Caco-2 (cell line): ENCODE measurements at regions of chr1 and their contacts with region 1.

Region 1: GRCh38 chr1:244272471-244273261 is 179.0 kb downstream of the ADSS2 start:
- DNase-seq: peak; percentile 53 to 76
- H3K4me3 ChIP-seq: no peak overlapping the region
- H3K4me3 Mint-ChIP-seq: no peak overlapping the region
- H3K27ac Mint-ChIP-seq: no peak overlapping the region
- H3K4me1 ChIP-seq: no peaks in the 10 kb centered on the region
- H3K4me1 Mint-ChIP-seq: no peaks in the 10 kb centered on the region
- H3K27me3 ChIP-seq: no peaks in the 10 kb centered on the region
- H3K27me3 Mint-ChIP-seq: no peaks in the 10 kb centered on the region
- CTCF ChIP-seq: peak; percentile 95 to 99

Region 2: GRCh38 chr1:243508303-243508713 is 764.4 kb before region 1 on chr1:
- CTCF ChIA-PET with region 1: no interaction called
- POLR2A ChIA-PET with region 1: no interaction called
- intact Hi-C with region 1: loop called (anchors 10 kb)
- DNase-seq: no peak
- H3K4me3 ChIP-seq: no peak overlapping the region
- H3K4me3 Mint-ChIP-seq: no peak overlapping the region
- H3K27ac Mint-ChIP-seq: no peak overlapping the region
- H3K4me1 ChIP-seq: no peaks in the 10 kb centered on the region
- H3K4me1 Mint-ChIP-seq: no peaks in the 10 kb centered on the region
- H3K27me3 ChIP-seq: no peaks in the 10 kb centered on the region
- H3K27me3 Mint-ChIP-seq: no peaks in the 10 kb centered on the region
- CTCF ChIP-seq: no peak

Region 3: GRCh38 chr1:243946946-243947345 is 325.7 kb before region 1 on chr1:
- CTCF ChIA-PET with region 1: no interaction called
- POLR2A ChIA-PET with region 1: no interaction called
- intact Hi-C with region 1: loop called (anchors 2 kb)
- DNase-seq: peak in 1 of 2 experiments; percentile 35
- H3K4me3 ChIP-seq: no peak overlapping the region
- H3K4me3 Mint-ChIP-seq: no peak overlapping the region
- H3K27ac Mint-ChIP-seq: no peak overlapping the region
- H3K4me1 ChIP-seq: peaks cover 35% of the 10 kb centered on the region
- H3K4me1 Mint-ChIP-seq: peaks cover 5% of the 10 kb centered on the region
- H3K27me3 ChIP-seq: no peaks in the 10 kb centered on the region
- H3K27me3 Mint-ChIP-seq: no peaks in the 10 kb centered on the region
- CTCF ChIP-seq: peak; percentile 12 to 29

Region 4: DNA sequence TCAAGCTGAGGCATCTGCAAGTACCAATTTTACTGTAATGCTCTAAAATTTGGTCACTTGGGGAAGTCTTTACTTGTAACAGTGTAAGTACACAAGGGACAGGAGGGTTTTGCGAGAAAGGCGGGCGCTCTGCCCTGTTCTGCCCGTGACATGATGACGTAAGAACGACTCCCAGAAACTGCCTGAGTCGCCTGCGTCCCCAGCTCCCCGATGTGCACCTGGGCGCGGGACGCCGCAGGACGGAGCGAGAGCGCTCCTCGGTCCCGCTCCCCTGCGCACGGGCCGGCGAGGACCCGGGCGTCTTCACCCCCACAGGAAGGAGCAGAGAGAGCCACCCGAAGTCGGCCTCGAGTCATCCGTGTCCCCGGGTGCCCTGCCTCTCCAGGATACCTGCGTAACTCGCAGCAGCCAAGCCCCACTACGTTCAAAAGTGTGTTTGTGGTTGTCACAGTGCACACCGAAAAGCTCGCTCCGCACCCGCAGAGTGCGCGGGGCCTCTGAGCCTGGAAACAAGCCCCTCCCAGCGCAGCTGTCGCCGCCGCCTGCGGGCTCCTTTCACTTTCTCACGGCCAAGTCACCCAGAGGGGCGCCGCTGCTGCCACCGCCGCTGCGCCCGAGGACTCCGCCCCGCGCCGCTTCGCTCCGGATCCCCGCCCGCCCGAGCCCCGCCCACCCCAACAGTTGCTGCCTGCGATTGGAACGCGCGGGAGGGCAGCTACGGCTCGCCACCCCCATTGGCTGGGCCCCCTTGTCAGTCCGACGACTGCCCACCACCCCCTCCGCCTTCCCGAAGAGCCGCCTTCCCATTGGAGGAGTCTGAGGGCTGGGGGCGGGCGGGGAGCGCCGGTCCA is 224.8 kb before region 1 on chr1:
- CTCF ChIA-PET with region 1: no interaction called
- POLR2A ChIA-PET with region 1: no interaction called
- intact Hi-C with region 1: loop called (anchors 1 kb)
- DNase-seq: peak; percentile 97 to 99
- H3K4me3 ChIP-seq: peak overlapping the region; percentile 96
- H3K4me3 Mint-ChIP-seq: peak overlapping the region; percentile 85
- H3K27ac Mint-ChIP-seq: peak overlapping the region; percentile 57
- H3K4me1 ChIP-seq: 0 out of 2 replicates have a peak, but pooled peaks cover 11% of the 10 kb centered on the region
- H3K4me1 Mint-ChIP-seq: no peaks in the 10 kb centered on the region
- H3K27me3 ChIP-seq: no peaks in the 10 kb centered on the region
- H3K27me3 Mint-ChIP-seq: peaks cover 10% of the 10 kb centered on the region
- CTCF ChIP-seq: no peak

Region 5: GRCh38 chr1:244231572-244232315 is 40.9 kb before region 1 on chr1:
- CTCF ChIA-PET with region 1: no interaction called
- POLR2A ChIA-PET with region 1: no interaction called
- intact Hi-C with region 1: loop called (anchors 2 kb)
- DNase-seq: peak in 1 of 2 experiments; percentile 31
- H3K4me3 ChIP-seq: peak overlapping the region; percentile 38
- H3K4me3 Mint-ChIP-seq: peak overlapping the region; percentile 77
- H3K27ac Mint-ChIP-seq: no peak overlapping the region
- H3K4me1 ChIP-seq: peaks cover 3% of the 10 kb centered on the region; the same call in 1 of the 2 replicates
- H3K4me1 Mint-ChIP-seq: peaks cover 6% of the 10 kb centered on the region
- H3K27me3 ChIP-seq: no peaks in the 10 kb centered on the region
- H3K27me3 Mint-ChIP-seq: no peaks in the 10 kb centered on the region
- CTCF ChIP-seq: no peak

Region 6: DNA sequence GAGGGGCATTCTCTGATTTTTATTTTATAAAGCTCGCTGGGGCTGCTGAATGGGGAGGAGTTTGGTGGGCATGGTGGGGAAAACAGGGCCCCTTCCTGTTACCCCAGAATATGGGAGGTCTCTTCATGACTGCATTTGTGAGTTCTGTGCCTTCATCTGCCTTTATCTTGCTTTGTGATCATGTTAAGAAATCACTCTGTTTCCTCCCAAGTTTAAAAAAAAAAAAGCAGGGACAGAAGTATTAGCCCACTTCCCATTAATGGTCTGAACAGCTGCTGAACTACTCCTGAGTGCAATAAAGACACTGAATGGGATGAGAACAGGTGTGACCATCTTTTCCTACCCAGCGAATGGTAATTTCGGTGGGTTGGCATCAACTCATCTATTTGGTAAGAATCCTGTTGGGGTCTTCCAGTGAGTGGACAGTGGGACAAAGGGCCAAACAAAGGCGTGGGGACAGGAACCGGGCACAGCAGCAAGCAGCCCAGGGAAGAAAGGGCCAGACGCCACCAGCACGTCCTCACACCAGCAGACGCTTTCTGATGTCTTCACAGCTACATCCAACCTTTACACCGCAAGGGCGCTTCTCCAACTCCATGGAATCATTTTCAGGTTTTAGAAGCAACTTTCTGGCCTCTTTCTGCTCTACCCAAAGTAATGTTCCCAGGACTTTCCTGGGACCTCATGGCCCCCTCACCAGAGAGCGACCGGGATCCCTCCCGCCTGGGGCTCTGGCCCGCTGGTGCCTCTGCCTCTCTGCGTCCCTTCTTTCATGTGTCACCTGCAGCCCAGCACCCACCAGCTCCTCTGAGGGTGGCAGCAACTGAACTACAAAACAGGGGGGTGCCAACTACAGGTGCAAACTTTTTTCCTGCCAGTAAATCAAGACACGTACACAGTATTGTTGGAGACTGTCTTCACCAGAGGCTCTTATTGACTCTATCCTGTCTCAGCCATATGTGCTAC is 18.9 kb after region 1 on chr1:
- CTCF ChIA-PET with region 1: no interaction called
- POLR2A ChIA-PET with region 1: no interaction called
- intact Hi-C with region 1: no loop called
- DNase-seq: no peak
- H3K4me3 ChIP-seq: no peak overlapping the region
- H3K4me3 Mint-ChIP-seq: no peak overlapping the region
- H3K27ac Mint-ChIP-seq: no peak overlapping the region
- H3K4me1 ChIP-seq: no peaks in the 10 kb centered on the region
- H3K4me1 Mint-ChIP-seq: no peaks in the 10 kb centered on the region
- H3K27me3 ChIP-seq: no peaks in the 10 kb centered on the region
- H3K27me3 Mint-ChIP-seq: no peaks in the 10 kb centered on the region
- CTCF ChIP-seq: no peak

Region 7: GRCh38 chr1:244305746-244306341 is 33.2 kb after region 1 on chr1:
- CTCF ChIA-PET with region 1: no interaction called
- POLR2A ChIA-PET with region 1: no interaction called
- intact Hi-C with region 1: no loop called
- DNase-seq: no peak
- H3K4me3 ChIP-seq: no peak overlapping the region
- H3K4me3 Mint-ChIP-seq: no peak overlapping the region
- H3K27ac Mint-ChIP-seq: no peak overlapping the region
- H3K4me1 ChIP-seq: peaks cover 20% of the 10 kb centered on the region
- H3K4me1 Mint-ChIP-seq: peaks cover 28% of the 10 kb centered on the region
- H3K27me3 ChIP-seq: no peaks in the 10 kb centered on the region
- H3K27me3 Mint-ChIP-seq: no peaks in the 10 kb centered on the region
- CTCF ChIP-seq: no peak

Region 8: GRCh38 chr1:244361764-244362473 is 89.3 kb after region 1 on chr1:
- CTCF ChIA-PET with region 1: no interaction called
- POLR2A ChIA-PET with region 1: no interaction called
- intact Hi-C with region 1: no loop called
- DNase-seq: peak; percentile 79 to 82
- H3K4me3 ChIP-seq: no peak overlapping the region
- H3K4me3 Mint-ChIP-seq: peak overlapping the region; percentile 65
- H3K27ac Mint-ChIP-seq: peak overlapping the region; percentile 85
- H3K4me1 ChIP-seq: peaks cover 32% of the 10 kb centered on the region
- H3K4me1 Mint-ChIP-seq: peaks cover 17% of the 10 kb centered on the region
- H3K27me3 ChIP-seq: no peaks in the 10 kb centered on the region
- H3K27me3 Mint-ChIP-seq: no peaks in the 10 kb centered on the region
- CTCF ChIP-seq: no peak

Region 9: GRCh38 chr1:244796718-244797406 is 524.2 kb after region 1 on chr1:
- CTCF ChIA-PET with region 1: no interaction called
- POLR2A ChIA-PET with region 1: no interaction called
- intact Hi-C with region 1: no loop called
- DNase-seq: peak; percentile 63 to 74
- H3K4me3 ChIP-seq: no peak overlapping the region
- H3K4me3 Mint-ChIP-seq: no peak overlapping the region
- H3K27ac Mint-ChIP-seq: no peak overlapping the region
- H3K4me1 ChIP-seq: peaks cover 3% of the 10 kb centered on the region
- H3K4me1 Mint-ChIP-seq: peaks cover 9% of the 10 kb centered on the region
- H3K27me3 ChIP-seq: no peaks in the 10 kb centered on the region
- H3K27me3 Mint-ChIP-seq: no peaks in the 10 kb centered on the region
- CTCF ChIP-seq: peak; percentile 76 to 86